ENCODE measurements at regions of chr13 and their contacts with region 1.

Region 1: DNA sequence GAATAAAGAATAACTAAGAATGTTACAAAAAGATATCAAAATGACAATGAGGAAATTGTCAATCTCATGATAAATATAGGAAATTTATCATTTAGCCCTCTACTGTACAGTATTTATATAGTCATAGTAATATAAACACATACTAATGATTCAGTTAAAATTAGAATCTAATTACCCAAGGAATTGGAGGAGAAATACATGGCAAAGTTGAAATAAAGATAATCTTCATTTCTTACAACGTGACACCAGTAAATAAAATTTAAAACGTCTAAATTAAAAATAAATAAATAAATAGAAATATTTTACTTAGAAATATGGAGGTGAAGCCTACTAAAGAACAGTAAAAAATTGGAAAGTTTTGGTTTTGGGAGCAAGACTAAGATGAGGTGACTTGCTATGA is 2163.1 kb upstream of the PCDH20 start:
- DNase-seq: no peak
- ATAC-seq: no peak
- H3K4me3 ChIP-seq: no peak overlapping the region
- H3K27ac ChIP-seq: no peak overlapping the region
- H3K4me1 ChIP-seq: no peaks in the 10 kb centered on the region
- H3K27me3 ChIP-seq: no peaks in the 10 kb centered on the region
- CTCF ChIP-seq: no peak
- POLR2A ChIP-seq: no peak
- RAD21 ChIP-seq: no peak

Region 2: GRCh38 chr13:62626771-62627170 is 952.0 kb before region 1 on chr13:
- CTCF ChIA-PET with region 1: no interaction called
- POLR2A ChIA-PET with region 1: no interaction called
- RAD21 ChIA-PET with region 1: no interaction called
- intact Hi-C with region 1: no loop called
- DNase-seq: no peak
- ATAC-seq: no peak
- H3K4me3 ChIP-seq: no peak overlapping the region
- H3K27ac ChIP-seq: no peak overlapping the region
- H3K4me1 ChIP-seq: 0 out of 4 replicates have a peak, but pooled peaks cover 0 to 2% of the 10 kb centered on the region in 2 experiments
- H3K27me3 ChIP-seq: no peaks in the 10 kb centered on the region
- CTCF ChIP-seq: peak in 2 of 3 experiments; percentile 22 to 26; a peak in 1 of 6 replicates
- POLR2A ChIP-seq: no peak
- RAD21 ChIP-seq: no peak

Region 3: DNA sequence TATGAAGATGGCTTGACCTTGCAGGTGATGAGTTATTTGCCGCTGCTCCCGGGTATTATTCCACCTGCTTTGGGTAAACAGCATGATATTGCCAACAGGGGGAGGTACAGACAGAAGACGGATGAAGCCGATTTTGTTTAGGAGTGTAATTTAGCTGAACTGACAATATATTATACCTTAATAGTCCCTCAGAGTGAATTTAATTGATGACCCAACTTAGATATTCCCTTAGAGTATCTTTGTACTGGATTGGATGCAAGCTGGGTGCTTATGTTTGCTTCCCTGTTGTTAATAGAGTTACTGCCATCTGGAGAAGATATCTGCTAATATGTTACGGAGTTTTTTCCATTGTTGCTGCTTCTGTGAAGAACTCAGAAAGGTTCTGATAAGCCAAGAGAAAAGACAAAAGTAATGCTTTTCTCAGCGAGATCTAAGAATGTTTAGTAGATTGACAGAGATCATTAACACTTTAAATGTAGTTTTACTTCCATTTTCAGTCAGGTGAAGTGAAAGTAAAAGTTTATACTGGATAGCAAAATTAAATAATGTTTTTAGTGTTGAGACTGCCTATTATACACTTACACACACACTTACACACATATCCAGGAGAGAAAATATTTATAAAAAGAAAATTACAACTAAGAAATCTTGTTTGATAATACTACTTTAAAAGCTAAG is 57.7 kb after region 1 on chr13:
- CTCF ChIA-PET with region 1: no interaction called
- POLR2A ChIA-PET with region 1: no interaction called
- RAD21 ChIA-PET with region 1: no interaction called
- intact Hi-C with region 1: loop called (anchors 10 kb)
- DNase-seq: peak; percentile 41
- ATAC-seq: peak; percentile 94
- H3K4me3 ChIP-seq: peak overlapping the region; percentile 38 to 56
- H3K27ac ChIP-seq: no peak overlapping the region
- H3K4me1 ChIP-seq: no peaks in the 10 kb centered on the region
- H3K27me3 ChIP-seq: no peaks in the 10 kb centered on the region
- CTCF ChIP-seq: peak; percentile 16 to 56 (median 51); a peak in 3 of 6 replicates
- POLR2A ChIP-seq: no peak
- RAD21 ChIP-seq: peak; percentile 34; the same call in 1 of the 2 replicates

Region 4: DNA sequence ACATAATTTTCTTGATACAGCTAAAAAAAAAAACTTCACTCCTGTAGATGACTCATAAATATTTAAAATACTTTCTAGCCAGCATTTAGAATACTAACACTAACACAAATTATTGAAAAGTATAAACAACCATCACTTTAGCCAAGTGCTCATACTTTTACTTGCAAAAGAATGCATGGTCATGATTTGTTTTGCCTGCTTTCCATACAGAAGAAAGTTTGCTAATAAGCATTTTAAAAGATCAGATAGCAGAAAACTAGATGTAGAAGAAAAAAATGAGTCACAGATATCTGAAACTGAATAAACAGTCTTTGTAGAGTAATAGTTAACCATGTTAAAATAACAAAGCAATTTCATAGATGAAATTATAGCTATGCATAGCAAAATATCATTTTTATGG is 117.3 kb after region 1 on chr13:
- CTCF ChIA-PET with region 1: no interaction called
- POLR2A ChIA-PET with region 1: no interaction called
- RAD21 ChIA-PET with region 1: no interaction called
- intact Hi-C with region 1: no loop called
- DNase-seq: no peak
- ATAC-seq: no peak
- H3K4me3 ChIP-seq: no peak overlapping the region
- H3K27ac ChIP-seq: no peak overlapping the region
- H3K4me1 ChIP-seq: no peaks in the 10 kb centered on the region
- H3K27me3 ChIP-seq: no peaks in the 10 kb centered on the region
- CTCF ChIP-seq: no peak
- POLR2A ChIP-seq: no peak
- RAD21 ChIP-seq: no peak

Region 5: GRCh38 chr13:64180756-64181155 is 602.0 kb after region 1 on chr13:
- CTCF ChIA-PET with region 1: no interaction called
- POLR2A ChIA-PET with region 1: no interaction called
- RAD21 ChIA-PET with region 1: no interaction called
- intact Hi-C with region 1: no loop called
- DNase-seq: no peak
- ATAC-seq: no peak
- H3K4me3 ChIP-seq: no peak overlapping the region
- H3K27ac ChIP-seq: no peak overlapping the region
- H3K4me1 ChIP-seq: no peaks in the 10 kb centered on the region
- H3K27me3 ChIP-seq: no peaks in the 10 kb centered on the region
- CTCF ChIP-seq: no peak
- POLR2A ChIP-seq: no peak
- RAD21 ChIP-seq: no peak

Measured in HCT116 (cell line).